Tibial artery (tissue), 4 donors: ENCODE measurements at regions of chr19 and their contacts with region 1.

Region 1: GRCh38 chr19:6372594-6373095 is at the start of gene ALKBH7:
- DNase-seq: peak; percentile 100
- H3K4me3 ChIP-seq: peak within 1 kb of the TSS; percentile 76 to 88
- H3K27ac ChIP-seq: peak within 1 kb of the TSS; percentile 95 to 99
- H3K4me1 ChIP-seq: peaks cover 0 to 23% (median 16%) of the 10 kb centered on the region in 4 donors
- H3K27me3 ChIP-seq: no peaks in the 10 kb centered on the region
- CTCF ChIP-seq: no peak

Region 2: GRCh38 chr19:6424939-6425731 is 52.5 kb after region 1 on chr19:
- intact Hi-C with region 1: loop called (anchors 2 kb)
- DNase-seq: peak; percentile 100
- H3K4me3 ChIP-seq: peak overlapping the region; percentile 67 to 75
- H3K27ac ChIP-seq: peak overlapping the region; percentile 38 to 75
- H3K4me1 ChIP-seq: peaks cover 0 to 35% (median 27%) of the 10 kb centered on the region in 4 donors
- H3K27me3 ChIP-seq: no peaks in the 10 kb centered on the region
- CTCF ChIP-seq: peak in 1 of 2 experiments; percentile 35

Region 3: GRCh38 chr19:6476155-6476895 is 103.7 kb after region 1 on chr19:
- intact Hi-C with region 1: no loop called
- DNase-seq: no peak
- H3K4me3 ChIP-seq: no peak overlapping the region
- H3K27ac ChIP-seq: no peak overlapping the region
- H3K4me1 ChIP-seq: peaks cover 0 to 17% (median 10%) of the 10 kb centered on the region in 4 donors
- H3K27me3 ChIP-seq: peaks cover 0 to 78% of the 10 kb centered on the region in 2 donors
- CTCF ChIP-seq: no peak

Region 4: GRCh38 chr19:6737284-6738046 is 364.8 kb after region 1 on chr19 and contains the start of gene GPR108:
- intact Hi-C with region 1: loop called (anchors 10 kb)
- DNase-seq: peak; percentile 100
- H3K4me3 ChIP-seq: peak within 1 kb of the TSS; percentile 78 to 95
- H3K27ac ChIP-seq: peak within 1 kb of the TSS; percentile 93 to 97
- H3K4me1 ChIP-seq: peaks cover 0 to 46% (median 37%) of the 10 kb centered on the region in 4 donors
- H3K27me3 ChIP-seq: no peaks in the 10 kb centered on the region
- CTCF ChIP-seq: no peak